CD8-positive, alpha-beta memory T cell (primary cell): ENCODE measurements at regions of chr2 and their contacts with region 1.

Region 1: GRCh38 chr2:43194121-43194869 is 32.1 kb downstream of the ZFP36L2 start:
- DNase-seq: no peak
- H3K4me3 ChIP-seq: peak overlapping the region; percentile 74
- H3K4me3 Mint-ChIP-seq: peak overlapping the region; percentile 71 to 92 (median 85)
- H3K27ac ChIP-seq: peak overlapping the region; percentile 86
- H3K27ac Mint-ChIP-seq: peak overlapping the region; percentile 95 to 100 (median 98)
- H3K4me1 ChIP-seq: peaks cover 84% of the 10 kb centered on the region
- H3K4me1 Mint-ChIP-seq: peaks cover 55 to 76% (median 59%) of the 10 kb centered on the region in 3 donors
- H3K27me3 ChIP-seq: no peaks in the 10 kb centered on the region
- H3K27me3 Mint-ChIP-seq: no peaks in the 10 kb centered on the region

Region 2: DNA sequence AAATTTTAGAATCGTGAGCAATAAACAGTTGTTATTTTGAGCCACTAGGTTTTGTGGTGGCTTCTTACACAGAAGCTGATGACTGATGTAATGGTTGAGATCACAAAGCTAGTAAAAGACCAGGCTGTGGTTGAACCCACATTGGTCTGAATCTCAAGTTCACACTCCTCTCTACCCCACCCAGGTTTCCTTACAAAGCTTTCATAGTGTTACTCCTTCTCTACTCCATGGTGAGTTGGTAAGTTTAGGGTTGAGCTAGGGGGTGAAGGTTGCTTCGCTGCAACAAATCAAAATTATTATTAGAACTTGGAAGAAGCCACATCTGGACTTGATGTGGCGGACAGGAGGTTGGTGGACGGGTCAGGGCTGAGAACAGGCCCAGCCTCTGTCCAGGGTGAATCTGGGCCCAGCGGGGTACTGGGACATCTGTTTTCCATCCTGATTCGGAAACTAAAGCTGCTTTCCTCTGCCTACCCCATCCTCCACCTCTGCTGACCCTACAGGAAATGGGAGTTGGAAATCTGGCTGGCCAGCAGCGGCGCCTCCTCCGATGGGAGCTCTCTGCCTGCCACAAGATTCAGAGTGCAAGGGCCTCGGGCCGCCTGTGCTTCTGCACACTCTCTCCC is 54.2 kb before region 1 on chr2:
- CTCF ChIA-PET with region 1: interaction called, 11 read pairs
- POLR2A ChIA-PET with region 1: interaction called, 5 read pairs
- DNase-seq: peak in 3 of 5 donors; percentile 64 to 74 (median 71)
- H3K4me3 ChIP-seq: peak overlapping the region; percentile 19
- H3K4me3 Mint-ChIP-seq: peak overlapping the region; percentile 46 to 89 (median 69)
- H3K27ac ChIP-seq: peak overlapping the region; percentile 58
- H3K27ac Mint-ChIP-seq: peak overlapping the region; percentile 89 to 99 (median 98)
- H3K4me1 ChIP-seq: peaks cover 93% of the 10 kb centered on the region
- H3K4me1 Mint-ChIP-seq: peaks cover 61 to 80% (median 79%) of the 10 kb centered on the region in 3 donors
- H3K27me3 ChIP-seq: no peaks in the 10 kb centered on the region
- H3K27me3 Mint-ChIP-seq: peaks cover 0 to 4% of the 10 kb centered on the region in 2 donors

Region 3: GRCh38 chr2:43169987-43170386 is 24.3 kb before region 1 on chr2:
- CTCF ChIA-PET with region 1: interaction called, 30 read pairs
- POLR2A ChIA-PET with region 1: interaction called, 17 read pairs
- DNase-seq: peak; percentile 42 to 77 (median 67)
- H3K4me3 ChIP-seq: peak overlapping the region; percentile 57
- H3K4me3 Mint-ChIP-seq: peak overlapping the region; percentile 57 to 94 (median 84)
- H3K27ac ChIP-seq: peak overlapping the region; percentile 53
- H3K27ac Mint-ChIP-seq: peak overlapping the region; percentile 91 to 100 (median 99)
- H3K4me1 ChIP-seq: peaks cover 80% of the 10 kb centered on the region
- H3K4me1 Mint-ChIP-seq: peaks cover 73 to 85% (median 81%) of the 10 kb centered on the region in 3 donors
- H3K27me3 ChIP-seq: no peaks in the 10 kb centered on the region
- H3K27me3 Mint-ChIP-seq: peaks cover 0 to 5% of the 10 kb centered on the region in 2 donors

Region 4: GRCh38 chr2:43178602-43179542 is 15.4 kb before region 1 on chr2:
- CTCF ChIA-PET with region 1: interaction called, 30 read pairs
- POLR2A ChIA-PET with region 1: interaction called, 17 read pairs
- DNase-seq: no peak
- H3K4me3 ChIP-seq: no peak overlapping the region
- H3K4me3 Mint-ChIP-seq: peak overlapping the region in 2 of 7 donors; percentile 59 to 69
- H3K27ac ChIP-seq: peak overlapping the region; percentile 79
- H3K27ac Mint-ChIP-seq: peak overlapping the region; percentile 90 to 99 (median 92)
- H3K4me1 ChIP-seq: peaks cover 69% of the 10 kb centered on the region
- H3K4me1 Mint-ChIP-seq: peaks cover 69 to 77% (median 73%) of the 10 kb centered on the region in 3 donors
- H3K27me3 ChIP-seq: no peaks in the 10 kb centered on the region
- H3K27me3 Mint-ChIP-seq: peaks cover 0 to 4% of the 10 kb centered on the region in 2 donors

Region 5: GRCh38 chr2:43219383-43220228 is 25.3 kb after region 1 on chr2:
- CTCF ChIA-PET with region 1: interaction called, 33 read pairs
- POLR2A ChIA-PET with region 1: interaction called, 17 read pairs
- DNase-seq: peak; percentile 64 to 94 (median 90)
- H3K4me3 ChIP-seq: peak overlapping the region; percentile 99
- H3K4me3 Mint-ChIP-seq: peak overlapping the region; percentile 80 to 99 (median 98)
- H3K27ac ChIP-seq: peak overlapping the region; percentile 97
- H3K27ac Mint-ChIP-seq: peak overlapping the region; percentile 91 to 99 (median 98)
- H3K4me1 ChIP-seq: peaks cover 40% of the 10 kb centered on the region
- H3K4me1 Mint-ChIP-seq: peaks cover 48 to 56% (median 55%) of the 10 kb centered on the region in 3 donors
- H3K27me3 ChIP-seq: no peaks in the 10 kb centered on the region
- H3K27me3 Mint-ChIP-seq: peaks cover 0 to 26% of the 10 kb centered on the region in 2 donors